Left cardiac atrium (tissue), 4 donors: ENCODE measurements at regions of chr22 and their contacts with region 1.

Region 1: DNA sequence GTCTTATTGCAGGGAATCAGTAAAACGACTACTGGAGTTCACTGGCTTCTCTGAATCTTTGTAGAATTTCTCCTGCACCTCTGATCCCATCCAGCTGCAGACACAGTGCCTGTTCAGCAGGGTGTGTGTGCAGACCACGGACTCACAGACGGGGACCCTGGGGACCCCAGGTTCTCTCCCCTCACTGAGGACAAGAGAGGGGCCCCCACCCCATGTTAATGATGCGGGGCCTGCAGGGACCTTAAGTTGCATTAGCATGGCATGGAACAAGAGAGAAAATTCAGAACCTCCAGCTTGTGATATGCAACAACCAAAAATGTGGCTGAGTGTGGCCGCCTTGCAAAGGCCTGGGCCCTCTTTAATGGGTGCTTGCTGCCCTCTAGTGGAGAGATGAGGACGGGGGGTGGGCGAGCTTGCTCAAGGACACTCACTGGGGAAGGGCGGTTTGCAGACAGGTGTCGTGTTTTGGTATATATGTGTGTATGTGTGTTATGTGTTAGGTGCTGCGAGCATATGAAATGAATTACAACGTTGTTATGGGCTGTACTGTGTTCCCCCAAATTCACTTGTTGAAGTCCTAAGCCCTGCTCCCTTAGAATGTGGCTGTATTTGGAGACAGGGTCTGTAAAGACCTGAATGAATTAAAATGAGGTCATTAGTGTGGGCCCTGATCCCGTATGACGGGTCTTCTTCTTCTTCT is 84.4 kb upstream of the SEPTIN5 start:
- DNase-seq: peak; percentile 78
- ATAC-seq: peak; percentile 89 to 96

Region 2: GRCh38 chr22:19130959-19131684 is 498.7 kb before region 1 on chr22 and contains the start of gene TSSK2:
- intact Hi-C with region 1: loop called in 1 of 2 experiments (anchors 10 kb)
- DNase-seq: no peak
- ATAC-seq: no peak
- total RNA-seq, gene TSSK2: not detected

Region 3: GRCh38 chr22:19143967-19144400 is 485.9 kb before region 1 on chr22:
- intact Hi-C with region 1: loop called (anchors 10 kb)
- DNase-seq: no peak
- ATAC-seq: no peak

Region 4: GRCh38 chr22:19495562-19496323 is 134.1 kb before region 1 on chr22:
- intact Hi-C with region 1: loop called (anchors 5 kb)
- DNase-seq: no peak
- ATAC-seq: no peak

Region 5: GRCh38 chr22:19523240-19524169 is 106.4 kb before region 1 on chr22:
- intact Hi-C with region 1: loop called in 1 of 2 experiments (anchors 10 kb)
- DNase-seq: no peak
- ATAC-seq: peak; percentile 1 to 3

Region 6: GRCh38 chr22:19691721-19692341 is 62.0 kb after region 1 on chr22:
- intact Hi-C with region 1: loop called in 1 of 2 experiments (anchors 10 kb)
- DNase-seq: no peak
- ATAC-seq: peak; percentile 31 to 76

Region 7: GRCh38 chr22:20130739-20131596 is 501.1 kb after region 1 on chr22:
- intact Hi-C with region 1: no loop called
- DNase-seq: peak; percentile 93
- ATAC-seq: peak; percentile 93